PC-9 (cell line): ENCODE measurements at regions of chr9 and their contacts with region 1.

Region 1: GRCh38 chr9:127838375-127839078 is 15.9 kb downstream of the ENG start:
- DNase-seq: peak; percentile 78 to 88
- H3K4me3 ChIP-seq: peak overlapping the region; percentile 47; the same call in 1 of the 2 replicates
- H3K27ac ChIP-seq: peak overlapping the region; percentile 76
- H3K4me1 ChIP-seq: peaks cover 25% of the 10 kb centered on the region
- H3K27me3 ChIP-seq: no peaks in the 10 kb centered on the region
- CTCF ChIP-seq: no peak

Region 2: GRCh38 chr9:127854184-127854806 is 15.8 kb after region 1 on chr9 and contains the start of gene ENG:
- CTCF ChIA-PET with region 1: interaction called, 3 read pairs
- POLR2A ChIA-PET with region 1: no interaction called
- intact Hi-C with region 1: loop called (anchors 2 kb)
- DNase-seq: peak; percentile 43 to 78
- H3K4me3 ChIP-seq: peak within 1 kb of the TSS; percentile 54
- H3K27ac ChIP-seq: no peak within 1 kb of the TSS
- H3K4me1 ChIP-seq: peaks cover 16% of the 10 kb centered on the region
- H3K27me3 ChIP-seq: no peaks in the 10 kb centered on the region
- CTCF ChIP-seq: no peak
- total RNA-seq, gene ENG: 18.4 and 23.1 TPM in 2 replicates